MCF 10A (cell line): ENCODE measurements at regions of chr5 and their contacts with region 1.

Region 1: DNA sequence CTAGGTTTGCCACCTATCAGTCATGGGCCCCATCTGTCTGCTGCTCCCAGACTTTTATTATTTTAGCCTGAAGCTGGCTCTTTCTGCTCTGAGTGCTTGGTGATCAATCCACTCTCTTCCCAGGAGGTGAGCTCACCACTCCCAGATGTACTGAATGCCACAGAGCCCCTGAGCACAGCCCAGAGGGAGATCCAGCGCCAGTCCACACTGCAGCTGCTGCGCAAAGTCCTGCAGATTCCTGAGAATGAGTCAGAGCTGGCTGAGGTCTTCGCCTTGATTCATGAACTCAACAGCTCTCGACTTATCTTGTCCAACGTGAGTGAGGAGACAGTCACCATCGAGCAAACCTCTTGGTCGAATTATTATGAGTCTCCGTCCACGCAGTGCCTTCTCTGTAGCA is 36.0 kb downstream of the HMGXB3 start:
- DNase-seq: peak; percentile 95
- H3K4me3 Mint-ChIP-seq: peak overlapping the region; percentile 9
- H3K27ac Mint-ChIP-seq: peak overlapping the region; percentile 36
- H3K4me1 Mint-ChIP-seq: peaks cover 31% of the 10 kb centered on the region
- H3K27me3 Mint-ChIP-seq: no peaks in the 10 kb centered on the region
- CTCF ChIP-seq: no peak

Region 2: GRCh38 chr5:150022163-150022540 is 14.4 kb before region 1 on chr5:
- CTCF ChIA-PET with region 1: interaction called, 14 read pairs
- POLR2A ChIA-PET with region 1: interaction called, 66 read pairs
- intact Hi-C with region 1: loop called (anchors 2 kb)
- DNase-seq: peak; percentile 98
- H3K4me3 Mint-ChIP-seq: peak overlapping the region; percentile 63
- H3K27ac Mint-ChIP-seq: peak overlapping the region; percentile 89
- H3K4me1 Mint-ChIP-seq: peaks cover 48% of the 10 kb centered on the region
- H3K27me3 Mint-ChIP-seq: no peaks in the 10 kb centered on the region
- CTCF ChIP-seq: no peak

Region 3: GRCh38 chr5:150052956-150053712 is 16.6 kb after region 1 on chr5:
- CTCF ChIA-PET with region 1: interaction called, 6 read pairs
- POLR2A ChIA-PET with region 1: interaction called, 18 read pairs
- intact Hi-C with region 1: no loop called
- DNase-seq: peak; percentile 74
- H3K4me3 Mint-ChIP-seq: no peak overlapping the region
- H3K27ac Mint-ChIP-seq: peak overlapping the region; percentile 41
- H3K4me1 Mint-ChIP-seq: peaks cover 46% of the 10 kb centered on the region
- H3K27me3 Mint-ChIP-seq: no peaks in the 10 kb centered on the region
- CTCF ChIP-seq: no peak

Region 4: GRCh38 chr5:150112261-150113046 is 75.9 kb after region 1 on chr5:
- CTCF ChIA-PET with region 1: interaction called, 5 read pairs
- POLR2A ChIA-PET with region 1: interaction called, 5 read pairs
- intact Hi-C with region 1: loop called (anchors 5 kb)
- DNase-seq: peak; percentile 93
- H3K4me3 Mint-ChIP-seq: no peak overlapping the region
- H3K27ac Mint-ChIP-seq: peak overlapping the region; percentile 46
- H3K4me1 Mint-ChIP-seq: peaks cover 47% of the 10 kb centered on the region
- H3K27me3 Mint-ChIP-seq: no peaks in the 10 kb centered on the region
- CTCF ChIP-seq: no peak

Region 5: GRCh38 chr5:150122158-150122510 is 85.6 kb after region 1 on chr5:
- CTCF ChIA-PET with region 1: no interaction called
- POLR2A ChIA-PET with region 1: interaction called, 6 read pairs
- intact Hi-C with region 1: loop called (anchors 1 kb)
- DNase-seq: peak; percentile 63
- H3K4me3 Mint-ChIP-seq: no peak overlapping the region
- H3K27ac Mint-ChIP-seq: peak overlapping the region; percentile 2
- H3K4me1 Mint-ChIP-seq: peaks cover 9% of the 10 kb centered on the region
- H3K27me3 Mint-ChIP-seq: no peaks in the 10 kb centered on the region
- CTCF ChIP-seq: peak; percentile 62